ENCODE measurements at regions of chr6 and their contacts with region 1.

Region 1: GRCh38 chr6:84033523-84034451 is at the start of gene MRAP2:
- DNase-seq: peak; percentile 32
- H3K4me3 ChIP-seq: peak within 1 kb of the TSS; percentile 56 to 67 (median 61)
- H3K27ac ChIP-seq: no peak within 1 kb of the TSS
- H3K4me1 ChIP-seq: no peaks in the 10 kb centered on the region
- H3K27me3 ChIP-seq: peaks cover 3% of the 10 kb centered on the region
- CTCF ChIP-seq: no peak
- total RNA-seq, gene MRAP2: 0.54 to 3.2 TPM

Region 2: GRCh38 chr6:83978324-83978734 is 55.5 kb before region 1 on chr6:
- CTCF ChIA-PET with region 1: interaction called, 15 read pairs
- dilution Hi-C with region 1: no loop called
- in situ Hi-C with region 1: no loop called
- intact Hi-C with region 1: no loop called
- DNase-seq: no peak
- H3K4me3 ChIP-seq: no peak overlapping the region
- H3K27ac ChIP-seq: no peak overlapping the region
- H3K4me1 ChIP-seq: no peaks in the 10 kb centered on the region
- H3K27me3 ChIP-seq: no peaks in the 10 kb centered on the region
- CTCF ChIP-seq: no peak